Lower leg skin (tissue), 4 donors: ENCODE measurements at regions of chr9 and their contacts with region 1.

Region 1: GRCh38 chr9:130701056-130702022 is 7.8 kb downstream of the EXOSC2 start:
- DNase-seq: peak in 1 of 2 donors; percentile 94
- H3K4me3 ChIP-seq: no peak overlapping the region
- CTCF ChIP-seq: peak in 1 of 3 donors; percentile 87
- POLR2A ChIP-seq: no peak

Region 2: DNA sequence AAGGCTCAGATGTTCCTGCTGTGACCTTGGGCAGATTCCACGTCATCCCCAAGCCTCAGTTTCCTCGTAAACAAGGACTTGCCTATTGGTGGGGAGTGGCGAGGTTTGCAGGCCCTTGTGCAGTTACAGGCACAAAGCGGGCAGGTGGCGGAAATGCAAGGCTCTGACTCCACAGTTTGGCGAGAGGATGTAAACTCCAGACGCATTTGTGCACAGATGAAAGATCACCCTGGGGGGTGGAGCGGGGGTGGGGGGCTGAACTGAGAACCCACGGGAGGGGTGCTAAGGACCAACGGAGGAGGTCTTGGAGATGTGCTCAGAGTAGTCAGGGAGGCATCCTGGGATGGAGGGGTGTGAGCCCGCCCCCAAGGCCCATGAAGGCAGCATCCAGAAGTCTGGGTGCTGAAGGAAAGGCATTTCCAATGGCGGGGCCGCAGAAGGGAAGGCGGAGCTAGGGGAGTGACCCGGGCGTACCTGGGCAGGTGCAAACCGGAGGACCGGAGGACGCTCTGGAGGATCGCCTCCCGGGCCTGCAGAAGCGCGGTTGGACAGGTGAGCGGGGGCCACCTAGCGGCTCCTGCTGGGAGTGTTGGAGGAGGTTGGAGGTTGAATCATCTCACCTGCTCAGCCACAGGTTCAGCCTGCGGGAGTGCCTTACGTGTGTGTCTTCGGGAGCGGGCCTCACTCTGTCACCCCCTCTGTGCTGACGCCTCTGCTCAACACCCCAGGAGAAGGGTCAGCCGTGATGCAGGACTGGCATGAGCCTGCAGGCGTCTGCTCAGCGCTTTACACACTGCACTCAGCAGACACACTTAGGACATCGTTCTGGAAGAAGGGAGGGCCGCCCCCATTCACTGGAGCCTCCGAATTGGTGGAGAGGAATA is 239.6 kb after region 1 on chr9:
- intact Hi-C with region 1: loop called (anchors 5 kb)
- DNase-seq: peak; percentile 55 to 93
- H3K4me3 ChIP-seq: no peak overlapping the region
- CTCF ChIP-seq: peak in 1 of 3 donors; percentile 35
- POLR2A ChIP-seq: no peak

Region 3: GRCh38 chr9:131046581-131047202 is 345.4 kb after region 1 on chr9:
- intact Hi-C with region 1: loop called (anchors 10 kb)
- DNase-seq: peak; percentile 52 to 92
- H3K4me3 ChIP-seq: no peak overlapping the region
- CTCF ChIP-seq: peak in 1 of 3 donors; percentile 58
- POLR2A ChIP-seq: no peak